Activated CD8-positive, alpha-beta memory T cell treated with anti-CD3 and anti-CD28 coated beads, Interleukin-2, amount 10 ng/mL, durations not matched to agents 7 days and 5 days (primary cell): ENCODE measurements at regions of chr5 and their contacts with region 1.

Region 1: DNA sequence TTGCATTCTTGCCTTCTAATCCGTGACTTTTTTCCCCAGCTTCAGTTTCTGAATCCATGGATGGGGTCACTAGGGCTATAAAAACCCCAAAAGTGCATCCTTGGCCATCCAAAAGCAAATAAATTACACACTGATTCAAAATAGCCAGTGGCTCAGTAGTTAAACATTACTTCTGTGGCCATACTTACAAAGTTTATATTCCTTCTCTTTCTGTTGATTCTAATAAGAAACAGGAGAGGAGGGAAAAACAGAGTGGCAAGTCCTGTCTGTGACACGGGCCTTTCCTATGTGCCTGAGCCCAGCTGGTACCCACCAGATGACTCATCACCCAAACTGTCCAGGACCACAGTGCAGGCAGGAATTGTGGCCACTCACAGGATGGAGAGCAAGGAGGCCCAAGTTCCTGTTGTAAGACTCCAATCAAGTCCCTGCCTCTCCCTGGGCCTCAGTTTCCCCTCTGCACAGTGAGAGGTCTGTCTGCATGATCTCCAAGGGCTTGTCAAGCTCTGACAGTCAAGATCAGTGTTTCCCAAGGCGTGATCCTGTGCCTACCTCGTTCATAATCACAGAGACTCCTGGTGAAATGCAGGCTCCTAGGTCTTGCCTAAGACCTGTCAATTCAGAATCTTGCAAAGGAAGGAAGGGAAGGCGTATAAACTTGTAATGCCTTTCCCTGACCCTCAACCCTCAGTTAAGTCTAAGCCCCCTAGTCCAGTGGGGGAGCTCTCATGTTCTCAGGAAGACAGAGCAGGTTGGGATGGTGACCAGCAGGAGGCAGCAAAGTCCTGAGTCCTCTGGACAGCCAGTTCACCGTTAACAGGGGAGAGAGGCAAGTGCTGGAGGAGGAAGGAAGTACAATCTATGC is 29.5 kb downstream of the TNIP1 start:
- DNase-seq: peak; percentile 85
- ATAC-seq: peak; percentile 89
- H3K4me3 Mint-ChIP-seq: no peak overlapping the region
- H3K27ac Mint-ChIP-seq: peak overlapping the region; percentile 9
- H3K4me1 Mint-ChIP-seq: peaks cover 14% of the 10 kb centered on the region
- H3K27me3 Mint-ChIP-seq: no peaks in the 10 kb centered on the region

Region 2: DNA sequence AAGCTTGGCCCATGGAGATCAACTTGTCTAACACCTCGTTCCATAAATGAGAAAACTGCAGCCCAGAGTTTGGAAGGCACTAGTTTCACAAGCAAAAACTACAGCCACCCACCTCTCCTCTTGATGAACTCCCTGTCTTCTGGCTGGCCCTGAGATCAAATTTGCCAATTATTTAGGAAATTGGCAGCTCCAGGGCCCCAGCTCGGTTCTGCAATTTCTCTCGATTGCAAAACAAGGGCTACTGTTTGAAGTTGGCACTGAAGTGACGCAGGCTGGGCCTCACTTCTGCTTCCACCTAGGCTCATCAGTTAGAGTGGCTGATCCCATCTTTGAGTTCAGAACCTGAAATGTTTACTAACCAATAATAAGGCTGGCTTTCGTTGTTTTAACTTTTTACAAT is 34.6 kb before region 1 on chr5:
- CTCF ChIA-PET with region 1: no interaction called
- DNase-seq: no peak
- ATAC-seq: no peak
- H3K4me3 Mint-ChIP-seq: no peak overlapping the region
- H3K27ac Mint-ChIP-seq: no peak overlapping the region
- H3K4me1 Mint-ChIP-seq: peaks cover 8% of the 10 kb centered on the region
- H3K27me3 Mint-ChIP-seq: peaks cover 14% of the 10 kb centered on the region

Region 3: GRCh38 chr5:151068433-151069197 is 17.3 kb after region 1 on chr5:
- CTCF ChIA-PET with region 1: interaction called, 11 read pairs
- DNase-seq: peak; percentile 58
- ATAC-seq: peak; percentile 66
- H3K4me3 Mint-ChIP-seq: no peak overlapping the region
- H3K27ac Mint-ChIP-seq: peak overlapping the region; percentile 67
- H3K4me1 Mint-ChIP-seq: peaks cover 61% of the 10 kb centered on the region
- H3K27me3 Mint-ChIP-seq: no peaks in the 10 kb centered on the region

Region 4: DNA sequence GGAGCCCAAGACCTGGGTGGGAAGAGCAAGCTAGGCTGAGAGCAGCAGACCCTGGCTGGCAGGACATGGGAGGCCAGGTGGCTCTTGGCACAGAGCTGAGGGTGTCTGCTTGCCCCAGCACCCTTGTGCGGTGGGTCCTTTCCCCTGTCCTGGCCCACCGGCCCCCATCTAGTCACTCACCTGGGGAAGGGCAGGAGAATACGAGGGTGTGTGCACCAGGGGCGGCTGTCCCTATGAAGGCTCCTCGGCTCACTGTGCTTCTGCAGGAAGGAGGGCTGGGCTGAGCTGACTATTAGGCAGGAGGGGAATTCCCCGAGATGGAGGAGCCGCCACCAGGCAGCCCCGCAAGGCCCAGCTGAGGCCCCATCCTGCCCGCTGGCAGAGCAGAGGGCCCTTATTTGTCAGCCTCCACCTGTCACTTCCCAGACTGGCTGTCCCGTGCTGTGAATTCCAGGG is 35.6 kb after region 1 on chr5:
- CTCF ChIA-PET with region 1: interaction called, 16 read pairs
- DNase-seq: peak; percentile 81
- ATAC-seq: peak; percentile 89
- H3K4me3 Mint-ChIP-seq: peak overlapping the region; percentile 73
- H3K27ac Mint-ChIP-seq: peak overlapping the region; percentile 66
- H3K4me1 Mint-ChIP-seq: peaks cover 60% of the 10 kb centered on the region
- H3K27me3 Mint-ChIP-seq: peaks cover 26% of the 10 kb centered on the region

Region 5: DNA sequence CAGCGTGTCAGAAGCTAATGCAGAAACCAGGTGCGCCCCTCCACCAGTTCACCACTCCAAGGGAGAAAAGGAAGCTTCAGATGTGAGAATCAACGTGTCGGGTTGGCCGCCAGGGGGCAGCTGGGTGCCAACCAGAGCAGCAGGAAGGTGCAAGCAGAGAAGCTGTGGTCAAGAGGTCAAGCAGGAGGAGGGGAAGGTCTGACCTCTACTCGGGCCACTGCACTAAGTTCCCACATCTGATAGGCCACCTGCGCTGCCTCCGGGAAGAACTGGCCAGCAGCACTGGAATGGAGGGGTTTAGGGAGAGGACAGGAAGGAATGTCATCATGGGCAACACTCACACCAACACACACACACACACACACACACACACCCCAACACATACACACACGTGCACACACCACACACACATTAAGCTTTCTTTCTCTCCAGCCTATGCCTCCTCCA is 74.9 kb after region 1 on chr5:
- CTCF ChIA-PET with region 1: interaction called, 20 read pairs
- DNase-seq: peak; percentile 75
- ATAC-seq: peak; percentile 63
- H3K4me3 Mint-ChIP-seq: no peak overlapping the region
- H3K27ac Mint-ChIP-seq: peak overlapping the region; percentile 75
- H3K4me1 Mint-ChIP-seq: peaks cover 39% of the 10 kb centered on the region
- H3K27me3 Mint-ChIP-seq: no peaks in the 10 kb centered on the region

Region 6: GRCh38 chr5:151164686-151165392 is 113.5 kb after region 1 on chr5:
- CTCF ChIA-PET with region 1: interaction called, 77 read pairs
- DNase-seq: peak; percentile 86
- ATAC-seq: peak; percentile 98
- H3K4me3 Mint-ChIP-seq: no peak overlapping the region
- H3K27ac Mint-ChIP-seq: no peak overlapping the region
- H3K4me1 Mint-ChIP-seq: peaks cover 4% of the 10 kb centered on the region
- H3K27me3 Mint-ChIP-seq: no peaks in the 10 kb centered on the region